ACHN (cell line): ENCODE measurements at regions of chr15 and their contacts with region 1.

Region 1: GRCh38 chr15:48244921-48245320 is 38.8 kb downstream of the SLC12A1 start:
- DNase-seq: no peak

Region 2: DNA sequence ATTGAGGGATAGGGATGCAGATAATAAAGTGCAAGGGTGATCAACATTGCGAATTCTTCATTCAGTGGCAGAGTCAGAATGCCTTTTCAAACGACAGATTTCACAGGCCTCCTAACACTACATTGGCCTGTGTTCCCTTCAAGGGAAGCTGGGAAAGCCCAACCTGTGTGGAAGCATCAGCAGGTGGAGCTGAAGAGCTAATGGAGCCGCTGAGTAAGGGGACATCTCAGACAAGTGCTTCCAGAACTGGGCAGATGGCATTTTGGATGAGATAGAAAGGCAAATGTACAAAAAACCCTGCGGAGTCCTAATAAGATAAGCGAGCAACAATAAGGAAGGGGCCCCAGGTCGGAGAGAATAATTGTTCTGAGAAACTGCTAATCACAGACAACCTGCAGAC is 132.7 kb before region 1 on chr15:
- in situ Hi-C with region 1: loop called (anchors 25 kb)
- DNase-seq: peak; percentile 28

Region 3: DNA sequence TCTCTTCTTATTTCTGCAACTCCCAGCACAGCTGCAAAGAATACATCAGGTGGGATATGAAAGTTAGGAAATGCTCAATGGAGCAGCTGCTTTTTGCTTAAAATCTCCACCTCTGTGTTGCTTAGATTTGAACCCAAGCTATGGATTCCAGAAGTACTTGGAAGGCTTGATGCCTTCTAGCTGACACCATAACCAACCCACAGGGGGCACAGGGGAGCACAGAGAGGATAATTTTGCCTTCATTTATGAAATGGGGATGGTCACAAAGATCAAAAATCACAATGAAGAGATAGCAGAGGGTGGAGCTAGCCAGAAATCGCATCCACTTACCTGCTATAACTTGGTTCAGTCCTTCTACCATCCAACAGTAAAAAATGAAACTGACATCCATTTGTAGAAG is 162.0 kb after region 1 on chr15:
- in situ Hi-C with region 1: no loop called
- DNase-seq: no peak